ENCODE measurements at regions of chr9 and their contacts with region 1.

Region 1: DNA sequence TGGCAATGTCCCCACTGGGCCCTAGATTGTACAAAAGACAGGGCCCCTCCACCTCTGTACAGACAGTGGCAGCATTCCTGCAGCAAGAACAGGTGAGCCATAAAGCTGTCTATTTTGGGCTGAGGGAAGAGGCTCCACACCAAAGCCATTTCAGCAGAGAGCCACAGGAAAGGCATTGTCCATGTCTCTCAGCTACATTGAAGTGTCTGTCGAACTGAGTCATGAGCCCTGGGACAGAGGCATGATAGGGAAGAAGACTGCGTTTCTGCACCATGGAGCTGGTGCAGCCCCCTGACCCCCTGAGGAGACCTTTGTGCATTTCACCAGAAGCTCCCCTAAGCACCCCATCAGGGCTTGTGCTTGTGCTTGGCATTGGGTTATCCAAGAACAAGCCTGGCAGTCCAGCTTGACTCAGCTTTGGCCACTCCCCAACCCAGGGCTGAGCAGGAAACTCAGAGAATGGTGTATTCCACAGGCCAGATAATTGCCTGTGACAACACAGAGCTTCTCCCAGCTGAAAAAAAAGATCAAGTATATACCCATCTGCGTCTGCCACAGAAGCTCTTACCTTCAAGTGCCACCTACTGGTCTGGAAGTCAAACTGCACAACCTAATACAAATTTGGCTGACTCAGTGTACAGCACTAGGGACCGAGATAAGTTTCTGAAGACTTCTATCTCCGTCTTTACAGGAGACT is 5.9 kb upstream of the FRMD3 start:
- ATAC-seq: peak in 6 of 8 experiments; percentile 27 to 99 (median 98)
- H3K4me3 ChIP-seq: no peak overlapping the region
- H3K27ac ChIP-seq: no peak overlapping the region
- H3K4me1 ChIP-seq: no peaks in the 10 kb centered on the region

Region 2: GRCh38 chr9:83219152-83219923 is 324.8 kb before region 1 on chr9:
- in situ Hi-C with region 1: loop called in 4 of 9 experiments (anchors 25 kb)
- ATAC-seq: peak; percentile 86 to 95 (median 92)
- H3K4me3 ChIP-seq: peak overlapping the region; percentile 37 to 55 (median 44)
- H3K27ac ChIP-seq: peak overlapping the region; percentile 5 to 11
- H3K4me1 ChIP-seq: peaks cover 8 to 9% of the 10 kb centered on the region in 2 donors

Region 3: DNA sequence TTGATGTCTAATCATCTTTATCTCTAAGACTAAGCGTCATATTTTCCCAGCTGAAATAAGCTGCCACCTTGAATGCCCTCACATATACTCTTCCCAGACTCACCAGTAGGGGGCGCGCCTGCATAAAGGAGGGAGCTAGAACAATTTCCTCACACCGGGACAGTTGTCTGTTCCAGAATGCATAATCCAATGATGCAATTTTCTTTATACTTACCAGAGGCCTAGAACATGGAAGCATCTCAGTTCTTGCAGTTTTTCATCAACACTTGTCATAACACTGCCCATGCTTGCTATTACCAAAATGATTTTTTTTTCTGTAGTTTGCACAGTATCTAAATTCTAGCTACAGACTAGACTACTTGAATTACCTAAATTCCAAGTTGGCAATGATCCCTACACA is 209.8 kb before region 1 on chr9:
- in situ Hi-C with region 1: loop called in 2 of 9 experiments (anchors 10 to 25 kb)
- ATAC-seq: peak in 6 of 8 experiments; percentile 57 to 99 (median 94)
- H3K4me3 ChIP-seq: no peak overlapping the region
- H3K27ac ChIP-seq: no peak overlapping the region
- H3K4me1 ChIP-seq: no peaks in the 10 kb centered on the region

Region 4: DNA sequence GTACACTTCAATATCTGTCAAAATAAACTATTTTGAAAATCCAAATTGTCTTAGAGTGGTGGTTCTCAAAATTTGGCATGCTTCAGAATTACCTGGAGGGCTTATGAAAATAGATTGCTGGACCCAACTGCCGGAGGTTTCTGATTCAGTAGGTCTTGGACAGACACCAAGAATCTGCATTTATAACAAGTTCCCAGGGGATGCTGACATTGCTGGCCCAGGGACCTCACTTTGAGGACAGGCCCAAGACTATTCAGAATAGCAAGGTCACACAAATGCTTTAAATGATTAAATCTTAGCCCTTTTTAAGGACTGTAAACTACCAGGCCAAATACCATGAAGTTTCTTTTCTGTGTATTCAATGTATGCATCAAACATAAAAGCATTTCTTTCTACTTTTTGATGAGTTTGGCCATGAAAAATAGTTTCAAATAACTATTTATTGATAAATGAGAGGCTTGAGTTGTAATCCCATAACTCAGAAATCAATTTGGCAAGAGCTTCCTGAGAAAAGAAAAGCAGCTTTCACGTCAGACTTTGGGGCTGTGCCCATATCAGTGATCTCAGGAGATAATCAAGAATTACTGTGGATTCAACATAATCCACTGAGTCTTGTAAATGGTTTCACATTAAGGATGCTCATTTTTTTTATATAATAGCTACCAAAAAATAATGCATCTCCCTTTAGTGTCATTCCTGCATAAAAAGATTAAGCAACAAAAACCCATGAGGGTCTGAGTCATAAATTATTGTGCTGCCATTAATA is 197.3 kb before region 1 on chr9:
- in situ Hi-C with region 1: loop called in 2 of 9 experiments (anchors 10 to 25 kb)
- ATAC-seq: no peak
- H3K4me3 ChIP-seq: no peak overlapping the region
- H3K27ac ChIP-seq: no peak overlapping the region
- H3K4me1 ChIP-seq: peaks cover 0 to 6% of the 10 kb centered on the region in 2 donors